GM10248 (cell line): ENCODE measurements at regions of chr16 and their contacts with region 1.

Region 1: GRCh38 chr16:8868416-8869211 is at the start of gene CARHSP1:
- DNase-seq: peak; percentile 98
- CTCF ChIP-seq: no peak

Region 2: GRCh38 chr16:8885674-8886592 is 17.3 kb after region 1 on chr16:
- CTCF ChIA-PET with region 1: interaction called, 165 read pairs
- POLR2A ChIA-PET with region 1: interaction called, 14 read pairs
- DNase-seq: no peak
- CTCF ChIP-seq: no peak

Region 3: DNA sequence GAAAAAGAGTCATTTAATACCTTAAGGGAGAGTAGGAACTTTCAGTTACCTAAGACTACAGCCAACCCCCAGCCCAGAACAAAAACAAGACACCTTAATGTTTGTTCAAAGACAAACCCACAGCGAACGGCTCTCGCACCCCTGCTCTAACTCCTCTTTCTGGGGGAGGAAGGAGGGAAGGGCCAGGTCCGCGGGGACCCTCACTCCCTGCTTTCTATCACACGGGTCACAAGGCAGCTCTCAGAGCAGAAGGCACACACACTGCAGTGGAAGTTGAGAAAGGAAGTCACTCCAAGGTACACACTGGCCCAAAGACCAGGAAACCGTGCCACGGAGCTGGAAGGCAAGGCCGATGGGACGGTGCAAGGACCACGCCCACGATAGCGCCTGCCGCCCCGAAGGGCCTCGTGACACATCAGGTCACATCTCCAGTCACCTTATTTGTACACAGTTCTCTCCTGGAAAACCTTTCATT is 23.5 kb after region 1 on chr16:
- CTCF ChIA-PET with region 1: interaction called, 165 read pairs
- POLR2A ChIA-PET with region 1: interaction called, 14 read pairs
- DNase-seq: peak; percentile 45
- CTCF ChIP-seq: no peak